MCF 10A (cell line): ENCODE measurements at regions of chr15 and their contacts with region 1.

Region 1: GRCh38 chr15:100721770-100722550 is 119.6 kb downstream of the ASB7 start:
- DNase-seq: peak; percentile 99
- H3K4me3 Mint-ChIP-seq: peak overlapping the region; percentile 66
- H3K27ac Mint-ChIP-seq: peak overlapping the region; percentile 100
- H3K4me1 Mint-ChIP-seq: peaks cover 38% of the 10 kb centered on the region
- H3K27me3 Mint-ChIP-seq: no peaks in the 10 kb centered on the region
- CTCF ChIP-seq: no peak

Region 2: GRCh38 chr15:100737214-100737613 is 15.3 kb after region 1 on chr15:
- CTCF ChIA-PET with region 1: no interaction called
- POLR2A ChIA-PET with region 1: interaction called, 14 read pairs
- intact Hi-C with region 1: no loop called
- DNase-seq: no peak
- H3K4me3 Mint-ChIP-seq: no peak overlapping the region
- H3K27ac Mint-ChIP-seq: no peak overlapping the region
- H3K4me1 Mint-ChIP-seq: peaks cover 22% of the 10 kb centered on the region
- H3K27me3 Mint-ChIP-seq: no peaks in the 10 kb centered on the region
- CTCF ChIP-seq: no peak